ENCODE measurements at regions of chr20 and their contacts with region 1.

Region 1: DNA sequence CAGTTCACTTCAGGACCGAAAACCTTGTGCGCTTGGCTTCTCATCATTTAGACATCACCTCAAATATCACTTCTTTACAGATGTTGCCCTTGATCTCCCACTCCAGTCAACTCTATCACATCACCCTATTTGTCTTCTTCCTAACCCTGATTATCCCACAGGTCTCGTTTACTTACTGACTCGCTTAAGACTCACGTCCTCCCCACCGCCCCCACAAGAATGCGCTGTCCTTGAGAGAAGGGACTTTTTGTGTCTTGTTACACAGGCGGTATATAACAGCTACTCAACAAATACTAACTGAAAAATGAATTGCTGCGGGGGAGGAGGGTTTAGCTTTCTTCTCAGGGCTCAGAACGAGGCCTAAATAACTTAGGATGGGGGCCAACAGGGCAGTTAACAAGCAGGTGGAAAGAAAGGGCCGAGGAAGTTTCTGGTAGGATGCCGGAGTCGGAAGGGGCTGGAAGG is 527 bp downstream of the TOMM34 start:
- DNase-seq: peak in 1 of 3 donors; percentile 64
- H3K4me3 ChIP-seq: peak overlapping the region; percentile 64 to 92 (median 89)
- H3K4me3 Mint-ChIP-seq: peak overlapping the region; percentile 90 to 98
- H3K27ac ChIP-seq: peak overlapping the region in 1 of 2 donors; percentile 75
- H3K27ac Mint-ChIP-seq: peak overlapping the region in 6 of 7 donors; percentile 28 to 89 (median 78)
- H3K4me1 ChIP-seq: peaks cover 24 to 26% of the 10 kb centered on the region in 2 donors
- H3K4me1 Mint-ChIP-seq: peaks cover 42% of the 10 kb centered on the region
- H3K27me3 ChIP-seq: no peaks in the 10 kb centered on the region
- H3K27me3 Mint-ChIP-seq: no peaks in the 10 kb centered on the region
- CTCF ChIP-seq: no peak

Region 2: DNA sequence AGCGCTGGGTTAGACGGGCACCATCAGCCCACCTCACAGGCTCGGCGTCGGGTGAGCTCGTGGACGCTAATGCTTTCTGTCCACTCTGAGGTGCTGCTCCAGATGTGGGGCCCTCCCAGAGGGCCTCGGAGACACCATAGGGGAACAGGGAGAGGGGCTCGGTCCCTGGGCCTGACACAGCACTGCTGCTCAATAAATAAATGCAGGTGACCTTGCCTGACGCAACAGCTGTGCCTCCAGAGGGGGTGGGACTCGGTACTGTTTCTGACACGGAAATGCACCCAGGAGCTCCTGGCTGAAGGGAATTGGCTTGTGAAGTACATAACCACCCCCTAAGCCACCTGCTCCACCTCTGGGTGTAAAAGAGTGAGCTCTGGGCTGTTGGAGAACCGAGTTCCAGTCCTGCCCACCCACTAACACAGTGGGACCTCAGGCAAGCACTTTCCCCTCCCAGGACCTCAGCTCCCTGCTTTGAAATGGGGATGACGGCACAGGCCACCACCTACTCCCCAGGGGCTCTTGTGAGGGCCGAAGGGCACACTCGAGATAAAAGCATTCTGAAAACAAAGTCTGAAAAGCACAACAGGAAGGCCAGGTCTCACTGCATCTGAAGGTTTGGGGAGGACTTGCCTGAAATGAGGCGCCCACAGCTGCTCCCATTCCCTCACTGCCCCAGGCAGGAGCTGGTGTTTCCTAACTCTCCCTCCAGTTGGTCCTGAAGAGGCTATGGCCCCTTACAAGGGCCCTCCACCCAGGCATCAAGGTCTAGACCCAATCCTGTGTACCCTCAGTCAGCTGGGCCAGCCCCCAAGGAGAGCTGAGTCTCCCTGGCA is 207.4 kb before region 1 on chr20:
- intact Hi-C with region 1: no loop called
- DNase-seq: no peak
- H3K4me3 ChIP-seq: no peak overlapping the region
- H3K4me3 Mint-ChIP-seq: no peak overlapping the region
- H3K27ac ChIP-seq: no peak overlapping the region
- H3K27ac Mint-ChIP-seq: no peak overlapping the region
- H3K4me1 ChIP-seq: no peaks in the 10 kb centered on the region
- H3K4me1 Mint-ChIP-seq: peaks cover 1% of the 10 kb centered on the region
- H3K27me3 ChIP-seq: peaks cover under 1 to 11% of the 10 kb centered on the region in 2 donors
- H3K27me3 Mint-ChIP-seq: peaks cover 9 to 34% (median 9%) of the 10 kb centered on the region in 3 donors
- CTCF ChIP-seq: no peak

Region 3: GRCh38 chr20:44997171-44998067 is 37.7 kb after region 1 on chr20:
- intact Hi-C with region 1: loop called in 1 of 2 experiments (anchors 5 kb)
- DNase-seq: no peak
- H3K4me3 ChIP-seq: no peak overlapping the region
- H3K4me3 Mint-ChIP-seq: no peak overlapping the region
- H3K27ac ChIP-seq: peak overlapping the region in 1 of 2 donors; percentile 37
- H3K27ac Mint-ChIP-seq: peak overlapping the region in 3 of 7 donors; percentile 2 to 39 (median 19)
- H3K4me1 ChIP-seq: peaks cover 12 to 19% of the 10 kb centered on the region in 2 donors
- H3K4me1 Mint-ChIP-seq: peaks cover 13% of the 10 kb centered on the region
- H3K27me3 ChIP-seq: no peaks in the 10 kb centered on the region
- H3K27me3 Mint-ChIP-seq: no peaks in the 10 kb centered on the region
- CTCF ChIP-seq: no peak

Region 4: DNA sequence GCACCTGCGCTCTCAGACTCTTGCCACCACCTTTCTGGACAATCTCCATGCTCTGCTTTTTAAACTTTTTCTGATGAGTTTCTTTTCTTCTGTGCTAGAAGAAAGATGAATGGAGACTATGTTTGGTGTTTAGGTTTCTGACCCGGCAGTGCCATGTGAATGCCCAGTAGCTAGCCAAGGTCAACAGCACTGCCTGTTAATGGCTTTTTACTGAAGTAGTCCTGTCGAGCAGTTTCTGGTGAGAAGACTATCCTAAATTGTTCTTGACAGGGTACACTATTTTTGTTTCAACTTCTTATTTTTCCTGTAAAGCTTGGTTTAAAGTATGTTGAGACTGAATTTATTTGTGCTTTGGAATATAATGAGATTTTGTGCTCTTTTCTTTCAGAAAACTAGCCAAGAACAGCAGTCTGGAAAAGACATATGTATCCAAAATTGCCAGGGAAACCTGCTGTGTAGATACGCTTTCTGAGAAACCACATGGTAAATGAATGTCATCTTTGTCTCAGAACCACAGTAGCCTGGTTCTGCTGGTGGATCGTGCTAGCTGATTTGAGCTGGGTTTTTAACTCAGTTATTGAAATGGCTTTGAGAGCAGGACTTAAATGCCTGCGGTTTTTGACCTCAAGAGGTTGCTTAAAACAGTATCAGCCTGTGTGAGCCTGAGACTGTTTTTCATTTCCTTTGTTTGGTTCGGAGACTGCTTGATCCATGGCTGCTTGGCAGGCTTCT is 93.2 kb after region 1 on chr20:
- intact Hi-C with region 1: no loop called
- DNase-seq: no peak
- H3K4me3 ChIP-seq: no peak overlapping the region
- H3K4me3 Mint-ChIP-seq: no peak overlapping the region
- H3K27ac ChIP-seq: peak overlapping the region in 1 of 2 donors; percentile 32
- H3K27ac Mint-ChIP-seq: peak overlapping the region in 1 of 7 donors; percentile 55
- H3K4me1 ChIP-seq: no peaks in the 10 kb centered on the region
- H3K4me1 Mint-ChIP-seq: peaks cover 19% of the 10 kb centered on the region
- H3K27me3 ChIP-seq: no peaks in the 10 kb centered on the region
- H3K27me3 Mint-ChIP-seq: no peaks in the 10 kb centered on the region
- CTCF ChIP-seq: no peak